ENCODE measurements at regions of chr2 and their contacts with region 1.

Region 1: DNA sequence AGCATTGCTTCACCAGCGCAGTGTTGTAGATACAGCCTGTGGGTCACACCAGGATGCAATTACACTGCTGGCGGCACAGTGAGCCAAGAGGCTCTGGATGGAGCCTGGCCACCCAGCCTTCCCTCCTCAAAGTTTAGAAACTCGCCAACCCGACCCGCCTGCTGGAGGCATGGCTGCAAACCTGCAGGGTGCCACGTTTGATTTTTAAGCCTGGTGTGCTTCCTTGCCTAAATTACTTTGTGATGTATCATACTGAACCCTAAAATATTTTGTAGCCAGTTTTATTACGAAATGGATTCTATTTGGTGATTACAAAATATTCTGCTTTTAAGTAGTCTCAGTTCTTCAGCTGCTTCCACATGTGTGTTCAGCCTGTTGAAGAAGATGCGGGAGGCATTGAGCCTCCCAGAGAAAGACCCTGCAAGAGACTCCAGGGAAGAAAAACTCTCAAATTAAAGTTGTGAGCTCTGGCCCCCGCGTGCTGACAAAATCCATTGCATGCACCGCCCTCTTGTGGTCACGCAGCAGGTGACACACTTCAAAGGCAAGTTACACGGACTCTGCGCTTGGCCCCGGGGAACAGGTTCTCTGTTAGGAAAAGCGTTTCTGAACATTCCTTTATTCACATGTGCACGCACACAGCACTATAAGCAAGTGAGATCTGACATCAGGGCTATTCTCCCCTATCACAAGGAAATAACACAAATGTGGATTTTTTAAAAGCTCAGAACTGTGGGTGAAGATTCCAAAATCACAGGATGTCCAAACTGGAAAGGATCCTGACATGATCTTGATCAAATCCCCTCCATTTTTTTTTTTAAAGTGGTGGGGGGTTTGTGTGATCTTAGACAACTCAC is 63.0 kb upstream of the TWIST2 start:
- DNase-seq: peak in 1 of 2 donors; percentile 81
- H3K4me3 ChIP-seq: peak overlapping the region in 1 of 2 donors; percentile 38
- H3K27ac ChIP-seq: peak overlapping the region; percentile 1 to 62
- H3K4me1 ChIP-seq: no peaks in the 10 kb centered on the region
- H3K27me3 ChIP-seq: no peaks in the 10 kb centered on the region
- CTCF ChIP-seq: peak; percentile 82 to 89 (median 82)

Region 2: GRCh38 chr2:238513346-238513745 is 271.6 kb before region 1 on chr2:
- intact Hi-C with region 1: loop called (anchors 2 kb)
- DNase-seq: no peak
- H3K4me3 ChIP-seq: no peak overlapping the region
- H3K27ac ChIP-seq: no peak overlapping the region
- H3K4me1 ChIP-seq: no peaks in the 10 kb centered on the region
- H3K27me3 ChIP-seq: no peaks in the 10 kb centered on the region
- CTCF ChIP-seq: peak in 1 of 3 experiments; percentile 27

Measured in ascending aorta (tissue), 2 donors.